ENCODE measurements at regions of chr13 and their contacts with region 1.

Region 1: GRCh38 chr13:40406405-40407180 is 259.8 kb downstream of the FOXO1 start:
- DNase-seq: no peak
- ATAC-seq: no peak
- H3K4me3 ChIP-seq: no peak overlapping the region
- H3K27ac ChIP-seq: no peak overlapping the region
- H3K4me1 ChIP-seq: no peaks in the 10 kb centered on the region
- H3K27me3 ChIP-seq: no peaks in the 10 kb centered on the region

Region 2: DNA sequence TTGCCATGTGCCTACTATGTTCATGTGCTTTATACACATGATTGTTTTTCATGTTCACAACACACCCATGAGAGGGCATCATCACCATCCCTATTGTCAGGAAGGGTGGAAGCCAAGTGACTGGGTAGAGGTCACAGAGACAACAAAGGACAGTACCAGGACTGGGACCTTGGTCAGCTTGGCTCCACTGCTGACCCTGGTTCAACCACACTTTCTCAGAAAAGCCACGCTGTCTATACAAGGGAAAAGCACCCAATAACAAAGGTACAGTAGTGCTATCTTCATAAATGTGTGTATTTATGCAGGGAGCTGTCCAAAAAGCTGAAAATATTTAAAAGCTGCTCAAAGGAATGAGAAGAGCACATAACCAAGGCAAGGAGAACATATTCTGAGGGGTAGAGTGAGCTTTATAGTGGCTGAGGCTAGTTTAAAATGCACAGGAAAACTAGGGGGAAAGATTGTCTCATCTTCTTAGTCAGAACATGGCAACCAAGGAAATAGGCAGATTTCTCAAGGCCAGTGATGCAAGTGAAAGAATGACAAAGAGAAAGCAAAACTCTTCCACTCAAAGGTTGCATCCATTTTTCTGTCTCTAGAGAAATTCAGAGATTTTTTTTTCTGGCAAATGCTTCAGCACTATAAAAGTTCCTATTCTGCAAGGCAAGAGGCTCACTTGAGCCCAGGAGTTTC is 155.1 kb before region 1 on chr13:
- intact Hi-C with region 1: no loop called
- DNase-seq: no peak
- ATAC-seq: peak; percentile 23
- H3K4me3 ChIP-seq: no peak overlapping the region
- H3K27ac ChIP-seq: no peak overlapping the region
- H3K4me1 ChIP-seq: no peaks in the 10 kb centered on the region
- H3K27me3 ChIP-seq: no peaks in the 10 kb centered on the region

Region 3: GRCh38 chr13:40477623-40478608 is 71.3 kb after region 1 on chr13:
- intact Hi-C with region 1: no loop called
- DNase-seq: peak in 1 of 2 donors; percentile 69
- ATAC-seq: peak; percentile 61
- H3K4me3 ChIP-seq: no peak overlapping the region
- H3K27ac ChIP-seq: peak overlapping the region; percentile 32 to 77
- H3K4me1 ChIP-seq: no peaks in the 10 kb centered on the region
- H3K27me3 ChIP-seq: no peaks in the 10 kb centered on the region

Region 4: GRCh38 chr13:40671956-40672764 is 265.6 kb after region 1 on chr13:
- intact Hi-C with region 1: loop called in 1 of 2 experiments (anchors 5 kb)
- DNase-seq: no peak
- ATAC-seq: no peak
- H3K4me3 ChIP-seq: no peak overlapping the region
- H3K27ac ChIP-seq: no peak overlapping the region
- H3K4me1 ChIP-seq: no peaks in the 10 kb centered on the region
- H3K27me3 ChIP-seq: no peaks in the 10 kb centered on the region

Measured in aorta (tissue), 5 donors.